ENCODE measurements at regions of chr10 and their contacts with region 1.

Region 1: DNA sequence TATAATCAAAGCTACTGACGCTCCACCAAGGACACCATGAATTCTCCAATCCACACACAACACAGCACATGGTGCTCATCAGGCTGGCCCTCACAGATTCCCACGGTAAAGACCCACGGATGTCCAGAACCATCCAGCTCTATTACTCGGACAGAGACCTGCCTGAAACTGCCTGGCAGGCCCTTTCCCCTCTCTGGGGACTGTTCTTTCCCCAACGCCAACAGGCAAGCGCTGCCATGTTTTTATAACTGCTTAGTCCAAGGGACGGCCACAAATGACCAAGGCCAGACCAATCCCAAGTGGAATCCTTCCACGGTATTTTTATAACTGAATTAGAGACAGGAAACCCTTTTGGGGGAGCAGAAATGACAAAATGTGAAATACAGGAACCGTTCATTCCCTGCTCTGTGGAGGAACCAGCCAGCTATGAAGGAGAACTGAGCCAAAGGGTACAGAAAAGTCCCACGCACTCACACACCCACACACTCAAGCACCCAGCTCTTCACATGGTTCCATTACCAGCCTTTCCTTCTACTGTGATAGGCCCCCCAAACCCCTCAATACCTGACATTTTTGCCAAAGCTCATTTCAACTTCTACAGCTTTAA is 4.1 kb downstream of the PIP4K2A start:
- DNase-seq: peak in 1 of 35 experiments; percentile 30
- ATAC-seq: no peak
- H3K4me3 ChIP-seq: no peak overlapping the region
- H3K4me3 Mint-ChIP-seq: peak overlapping the region; percentile 52 to 89 (median 80)
- H3K27ac ChIP-seq: peak overlapping the region; percentile 47
- H3K27ac Mint-ChIP-seq: peak overlapping the region; percentile 85 to 93
- H3K4me1 ChIP-seq: peaks cover 39 to 48% of the 10 kb centered on the region in 2 experiments
- H3K4me1 Mint-ChIP-seq: peaks cover 71 to 76% (median 72%) of the 10 kb centered on the region in 3 donors
- H3K27me3 ChIP-seq: no peaks in the 10 kb centered on the region
- H3K27me3 Mint-ChIP-seq: no peaks in the 10 kb centered on the region

Region 2: GRCh38 chr10:22609728-22610465 is 100.3 kb before region 1 on chr10:
- CTCF ChIA-PET with region 1: interaction called in 1 of 2 experiments, 5 read pairs
- POLR2A ChIA-PET with region 1: interaction called, 4 to 11 read pairs
- DNase-seq: no peak
- ATAC-seq: no peak
- H3K4me3 ChIP-seq: no peak overlapping the region
- H3K4me3 Mint-ChIP-seq: peak overlapping the region; percentile 42 to 82 (median 72)
- H3K27ac ChIP-seq: peak overlapping the region; percentile 93
- H3K27ac Mint-ChIP-seq: peak overlapping the region; percentile 96 to 99
- H3K4me1 ChIP-seq: peaks cover 65 to 76% of the 10 kb centered on the region in 2 experiments
- H3K4me1 Mint-ChIP-seq: peaks cover 89 to 97% (median 95%) of the 10 kb centered on the region in 3 donors
- H3K27me3 ChIP-seq: no peaks in the 10 kb centered on the region
- H3K27me3 Mint-ChIP-seq: no peaks in the 10 kb centered on the region